Esophagus squamous epithelium (tissue), 5 donors: ENCODE measurements at regions of chr11 and their contacts with region 1.

Region 1: GRCh38 chr11:57345555-57346211 is 7.5 kb downstream of the P2RX3 start:
- DNase-seq: no peak
- H3K4me3 ChIP-seq: no peak overlapping the region
- H3K27ac ChIP-seq: no peak overlapping the region
- H3K4me1 ChIP-seq: peaks cover 0 to 11% (median 3%) of the 10 kb centered on the region in 3 donors
- H3K27me3 ChIP-seq: no peaks in the 10 kb centered on the region
- CTCF ChIP-seq: peak; percentile 56 to 87 (median 70)
- POLR2A ChIP-seq: no peak

Region 2: DNA sequence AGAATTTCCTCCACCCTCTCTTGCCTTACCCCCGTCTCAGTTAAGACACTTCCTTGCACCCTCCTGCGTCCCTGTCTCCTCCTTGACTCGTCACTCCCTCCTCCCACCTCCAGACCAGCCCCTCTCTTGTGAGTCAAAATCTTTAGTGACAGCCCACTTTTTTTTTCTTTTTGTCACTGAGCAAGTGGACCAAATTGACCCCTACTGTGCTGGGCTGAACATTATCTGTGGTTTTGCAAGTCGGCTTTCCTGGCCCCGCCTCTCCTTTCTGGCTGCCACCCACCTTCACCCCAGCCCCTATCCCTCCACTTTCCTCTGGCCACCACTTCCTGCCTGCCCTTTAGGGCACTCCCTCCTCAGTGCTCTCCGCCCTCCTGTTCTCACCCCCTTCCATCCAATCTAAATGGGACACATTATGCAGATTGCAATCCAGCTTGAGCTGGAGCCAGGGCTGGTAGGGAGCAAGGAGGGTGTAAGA is 108.4 kb before region 1 on chr11 and contains the start of gene APLNR:
- intact Hi-C with region 1: no loop called
- DNase-seq: no peak
- H3K4me3 ChIP-seq: peak within 1 kb of the TSS in 1 of 4 donors; percentile 39
- H3K27ac ChIP-seq: peak within 1 kb of the TSS in 1 of 4 donors; percentile 16
- H3K4me1 ChIP-seq: peaks cover 0 to 9% (median 0%) of the 10 kb centered on the region in 3 donors
- H3K27me3 ChIP-seq: peaks cover 0 to 55% (median 0%) of the 10 kb centered on the region in 4 donors
- CTCF ChIP-seq: no peak
- POLR2A ChIP-seq: no peak
- total RNA-seq, gene APLNR: 0.26 to 1.7 (median 0.34) TPM

Region 3: DNA sequence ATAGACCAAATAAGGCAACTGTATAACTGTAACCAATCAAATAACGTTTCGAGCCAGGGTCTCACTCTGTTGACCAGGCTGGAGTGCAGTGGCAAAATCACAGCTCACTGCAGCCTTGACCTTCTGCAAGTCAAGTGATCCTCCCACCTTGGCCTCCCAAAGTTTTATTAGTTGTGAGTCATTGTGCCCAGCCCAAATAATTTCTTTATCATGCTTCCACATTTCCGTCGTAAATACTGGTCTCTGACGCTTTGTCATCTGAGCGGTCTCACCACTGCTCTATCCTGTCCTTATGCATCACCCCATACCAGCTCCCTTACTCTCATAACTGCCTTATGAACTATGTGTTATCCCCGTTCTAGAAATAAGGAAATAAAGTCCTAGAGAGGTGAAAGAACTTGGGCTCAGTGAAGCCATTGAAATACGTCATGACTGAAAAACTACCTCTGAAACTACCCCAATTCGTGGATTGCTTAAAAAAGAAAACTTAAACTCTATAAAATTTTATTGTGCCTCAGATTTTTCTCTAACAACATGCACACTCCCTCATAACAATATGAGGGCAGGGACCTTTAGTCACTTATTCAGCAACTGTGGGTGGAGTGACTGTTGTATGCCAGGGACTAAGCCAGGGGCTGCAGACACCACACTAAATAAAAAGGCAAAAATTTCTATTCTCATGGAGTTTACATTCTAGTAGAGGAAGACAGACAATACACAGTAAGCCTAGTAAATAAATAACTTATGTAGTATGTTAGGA is 98.9 kb after region 1 on chr11:
- intact Hi-C with region 1: no loop called
- DNase-seq: no peak
- H3K4me3 ChIP-seq: no peak overlapping the region
- H3K27ac ChIP-seq: no peak overlapping the region
- H3K4me1 ChIP-seq: no peaks in the 10 kb centered on the region
- H3K27me3 ChIP-seq: no peaks in the 10 kb centered on the region
- CTCF ChIP-seq: no peak
- POLR2A ChIP-seq: no peak

Region 4: GRCh38 chr11:57480409-57481137 is 134.9 kb after region 1 on chr11:
- intact Hi-C with region 1: loop called (anchors 10 kb)
- DNase-seq: no peak
- H3K4me3 ChIP-seq: no peak overlapping the region
- H3K27ac ChIP-seq: no peak overlapping the region
- H3K4me1 ChIP-seq: peaks cover 30 to 53% (median 36%) of the 10 kb centered on the region in 3 donors
- H3K27me3 ChIP-seq: peaks cover 5 to 63% (median 10%) of the 10 kb centered on the region in 4 donors
- CTCF ChIP-seq: peak; percentile 28 to 76 (median 64)
- POLR2A ChIP-seq: no peak

Region 5: DNA sequence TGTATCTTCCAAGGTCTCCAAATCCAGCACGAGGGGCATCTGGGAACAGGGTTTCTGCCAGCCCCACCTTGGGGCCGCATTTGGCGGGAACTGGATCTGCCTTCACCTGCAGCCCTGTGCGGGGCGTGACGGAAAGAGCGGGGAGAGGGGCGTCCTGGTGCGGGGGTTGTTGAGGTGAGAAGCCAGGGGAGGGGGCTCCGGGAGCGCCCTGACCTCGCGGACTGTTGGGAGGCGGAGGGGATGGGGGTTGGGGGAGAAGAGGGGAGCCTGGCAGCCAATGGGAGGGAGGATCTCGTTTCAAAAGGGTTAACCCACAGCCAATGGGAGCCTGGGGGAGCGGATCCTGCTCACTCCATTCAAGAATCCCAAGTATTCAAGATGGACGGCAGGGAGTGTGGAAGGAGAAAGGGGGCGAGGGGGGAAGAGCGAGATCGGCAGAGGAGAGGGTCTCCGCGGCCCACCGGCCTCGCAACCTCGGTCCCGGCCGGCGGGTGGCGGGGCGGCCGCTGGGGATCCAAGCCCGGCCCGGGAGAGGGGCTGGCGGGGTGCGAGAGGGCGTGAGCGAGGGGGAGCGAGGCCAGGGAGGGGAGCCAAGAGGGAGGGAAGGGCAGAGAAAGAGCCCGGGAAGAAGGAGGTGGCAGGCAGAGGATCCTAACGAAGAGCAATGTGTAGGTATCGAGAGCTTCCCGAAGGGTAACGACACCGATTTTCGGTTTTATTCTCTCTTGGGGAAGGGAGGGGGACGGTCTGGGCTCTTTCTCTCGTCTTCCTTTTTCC is 292.5 kb after region 1 on chr11:
- intact Hi-C with region 1: loop called (anchors 10 kb)
- DNase-seq: no peak
- H3K4me3 ChIP-seq: peak overlapping the region; percentile 50 to 90 (median 63)
- H3K27ac ChIP-seq: peak overlapping the region; percentile 68 to 90 (median 82)
- H3K4me1 ChIP-seq: peaks cover 12 to 42% (median 20%) of the 10 kb centered on the region in 3 donors
- H3K27me3 ChIP-seq: peaks cover 0 to 5% (median 0%) of the 10 kb centered on the region in 4 donors
- CTCF ChIP-seq: no peak
- POLR2A ChIP-seq: no peak